Left colon (tissue), 2 donors: ENCODE measurements at regions of chr19 and their contacts with region 1.

Region 1: GRCh38 chr19:45523642-45524256 is 16.5 kb downstream of the VASP start:
- DNase-seq: peak; percentile 69 to 78
- ATAC-seq: peak; percentile 63

Region 2: DNA sequence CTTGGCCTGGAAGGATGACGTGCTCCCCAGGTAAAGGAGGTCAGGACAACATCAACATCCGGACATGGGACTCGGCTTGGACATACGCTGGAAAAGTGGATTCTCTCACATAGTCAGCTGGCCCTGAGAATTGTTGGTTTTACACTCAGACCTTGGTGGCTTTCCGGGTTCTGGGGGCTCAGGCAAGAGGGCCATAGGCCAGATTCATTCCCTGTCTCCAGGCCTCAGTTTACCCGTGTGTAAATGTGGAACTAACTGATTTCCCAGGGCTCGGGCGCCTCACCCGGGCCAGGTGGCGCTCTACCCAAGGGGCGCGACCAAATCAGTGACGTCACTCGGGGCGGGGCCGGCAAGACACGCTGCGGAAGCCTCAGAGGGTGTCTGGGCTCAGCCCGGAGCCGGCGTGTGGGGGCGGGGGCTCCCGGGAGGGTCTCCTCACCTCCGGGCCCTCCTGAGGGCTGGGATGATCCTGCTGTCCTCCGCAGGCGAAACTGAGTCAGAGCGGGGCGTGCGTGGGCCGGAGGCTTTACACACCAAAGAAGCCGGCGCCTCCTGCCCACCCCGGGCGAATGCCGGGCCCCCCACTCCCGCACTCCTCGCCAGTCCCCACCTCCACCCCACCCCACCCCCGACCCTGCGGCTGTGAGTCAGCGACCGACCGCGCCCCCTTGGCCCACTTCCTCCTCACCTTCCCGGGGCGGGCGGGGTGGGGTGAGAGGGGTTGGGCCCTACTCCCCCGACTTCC is 17.3 kb before region 1 on chr19:
- intact Hi-C with region 1: no loop called
- DNase-seq: peak; percentile 96 to 99
- ATAC-seq: peak; percentile 72

Region 3: DNA sequence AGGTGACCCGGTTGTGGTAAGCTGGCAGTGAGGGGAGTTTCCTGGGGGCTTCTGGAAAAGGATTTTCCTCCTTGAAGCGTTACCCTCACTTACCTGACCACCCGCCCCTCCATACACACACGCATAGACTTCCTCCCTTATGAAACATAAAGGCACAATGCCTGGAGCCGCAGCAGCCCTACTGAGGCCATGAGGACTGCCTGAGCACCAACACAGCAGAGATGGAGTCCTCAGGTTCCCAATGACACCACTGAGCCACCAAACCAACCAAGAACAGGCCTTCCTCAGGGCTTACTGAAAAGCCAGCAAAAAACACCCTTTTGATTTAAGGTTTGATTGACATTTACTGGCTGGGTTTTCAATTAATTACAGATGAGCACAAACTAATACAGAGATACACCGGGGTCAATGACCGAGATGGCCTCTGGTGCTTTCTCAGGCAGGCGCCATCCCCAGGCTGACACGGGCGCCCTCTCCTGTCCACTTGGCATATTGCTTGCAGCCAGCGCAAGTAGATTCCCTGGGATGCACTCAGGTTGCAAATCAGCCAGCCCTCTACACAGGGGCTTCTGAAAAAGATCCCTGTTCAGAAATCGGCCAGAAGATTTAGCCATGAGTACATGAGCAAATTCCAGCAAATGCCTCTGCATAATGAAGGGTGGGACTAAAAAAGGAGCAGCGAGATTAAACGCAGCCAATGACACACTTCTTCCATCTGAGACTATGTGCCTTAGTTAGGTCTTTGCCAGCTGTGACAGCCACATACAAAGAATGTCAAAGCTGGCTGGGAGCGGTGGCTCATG is 46.1 kb after region 1 on chr19:
- intact Hi-C with region 1: loop called in 1 of 2 experiments (anchors 10 kb)
- DNase-seq: peak; percentile 60 to 78
- ATAC-seq: peak; percentile 84

Region 4: GRCh38 chr19:45591004-45591637 is 67.4 kb after region 1 on chr19:
- intact Hi-C with region 1: no loop called
- DNase-seq: peak; percentile 51 to 76
- ATAC-seq: peak; percentile 89